SK-N-SH (cell line): ENCODE measurements at regions of chr12 and their contacts with region 1.

Region 1: DNA sequence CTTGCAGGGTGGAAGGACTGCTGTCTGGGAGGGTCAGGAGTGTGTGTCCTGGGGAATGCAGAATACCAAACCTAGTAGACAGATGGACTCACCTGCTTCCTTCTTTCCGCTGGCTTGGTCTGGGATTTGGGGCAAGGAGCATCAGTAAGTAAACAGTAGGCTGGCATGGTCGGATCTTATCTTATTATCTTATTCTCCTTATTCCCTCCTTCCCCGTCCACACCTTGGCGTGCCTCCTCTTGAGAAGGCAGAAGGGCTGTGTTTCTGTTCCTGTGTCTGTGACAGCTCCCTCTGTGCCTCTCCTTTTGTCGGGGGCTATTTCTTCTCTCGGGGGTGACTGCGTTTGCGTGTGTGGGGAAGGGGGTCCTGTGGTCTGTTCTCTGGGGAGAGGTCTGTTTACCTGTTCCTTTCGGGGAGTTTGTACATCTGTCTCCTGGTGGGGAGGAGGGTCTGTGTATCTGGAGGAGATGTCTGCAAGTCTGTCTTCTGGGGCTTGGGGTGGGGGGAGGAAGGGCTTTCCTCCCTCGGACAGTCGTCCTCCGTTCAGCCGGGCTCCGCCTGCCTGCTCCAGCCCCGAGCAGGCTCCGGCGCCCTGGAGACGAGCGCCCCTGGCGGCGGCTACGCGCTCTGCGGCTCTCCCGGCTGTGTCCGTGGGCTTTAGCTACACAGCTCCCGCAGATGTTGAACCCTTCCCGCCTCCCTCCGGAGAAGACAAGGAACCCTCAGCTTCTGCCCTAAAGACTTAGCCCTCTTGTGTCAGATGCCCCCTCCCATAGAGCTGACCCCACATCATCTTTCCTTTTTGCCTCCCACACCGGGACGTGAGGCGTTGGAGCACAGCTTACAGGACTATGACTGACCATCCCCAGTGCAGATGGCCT is 4.3 kb downstream of the KRT86 start:
- DNase-seq: peak; percentile 92
- H3K4me3 ChIP-seq: peak overlapping the region; percentile 14 to 31
- H3K27ac ChIP-seq: peak overlapping the region in 1 of 2 experiments; percentile 97; a peak in 2 of 4 replicates
- H3K4me1 ChIP-seq: peaks cover 11 to 28% of the 10 kb centered on the region in 2 experiments; a peak in 3 of 4 replicates
- H3K27me3 ChIP-seq: no peaks in the 10 kb centered on the region
- CTCF ChIP-seq: peak; percentile 97
- EP300 ChIP-seq: no peak
- RAD21 ChIP-seq: peak; percentile 84

Region 2: DNA sequence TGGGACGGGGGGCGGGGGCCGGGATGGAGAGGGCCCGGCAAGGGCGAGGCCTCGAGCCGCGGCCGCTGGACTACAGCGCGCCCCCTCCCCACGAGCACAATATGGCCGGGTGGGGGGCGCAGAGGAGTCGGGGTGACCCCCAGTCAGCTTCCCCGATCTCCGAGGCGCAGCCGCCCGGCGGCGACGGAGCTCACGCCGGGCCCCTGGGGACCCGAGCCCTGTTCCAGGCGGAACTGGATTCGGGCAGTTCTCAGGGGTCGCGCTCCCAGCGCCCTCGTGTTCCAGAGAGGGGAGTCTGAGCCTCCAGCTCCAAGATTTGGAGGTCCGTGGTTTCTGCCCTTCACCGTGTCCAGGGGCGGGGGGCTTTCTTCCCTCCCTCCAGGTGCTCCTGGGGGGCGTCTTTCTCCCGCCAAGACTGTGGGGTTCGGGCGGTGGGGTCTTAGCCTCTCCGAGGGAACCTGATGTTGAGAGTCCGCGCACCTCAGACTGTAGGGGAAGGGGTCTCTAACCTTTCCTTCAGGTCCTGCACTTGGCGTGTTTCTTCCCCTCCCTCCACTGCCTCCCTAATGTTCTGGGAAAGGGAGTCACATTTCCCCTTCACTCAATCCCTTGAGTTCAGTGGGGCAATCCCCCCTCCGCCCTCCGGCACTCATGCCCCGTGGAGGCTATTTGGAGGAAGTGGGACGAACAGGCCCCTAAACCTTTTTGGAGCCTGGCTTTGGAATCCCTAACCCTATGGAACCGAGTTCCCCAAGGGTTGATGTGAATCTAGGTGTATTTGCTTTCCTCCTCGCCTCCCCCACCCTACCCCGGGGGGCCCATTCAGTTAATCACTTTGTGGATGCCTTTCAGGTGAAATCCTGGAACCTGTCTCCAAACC is 326.7 kb before region 1 on chr12:
- CTCF ChIA-PET with region 1: no interaction called
- POLR2A ChIA-PET with region 1: no interaction called
- DNase-seq: peak; percentile 30
- H3K4me3 ChIP-seq: peak overlapping the region; percentile 84 to 94
- H3K27ac ChIP-seq: peak overlapping the region in 1 of 2 experiments; percentile 89; a peak in 2 of 4 replicates
- H3K4me1 ChIP-seq: peaks cover 6 to 20% of the 10 kb centered on the region in 2 experiments; a peak in 2 of 4 replicates
- H3K27me3 ChIP-seq: 0 out of 2 replicates have a peak, but pooled peaks cover 9% of the 10 kb centered on the region
- CTCF ChIP-seq: no peak
- EP300 ChIP-seq: no peak
- RAD21 ChIP-seq: no peak

Region 3: GRCh38 chr12:52186145-52186840 is 92.5 kb before region 1 on chr12:
- CTCF ChIA-PET with region 1: interaction called, 17 read pairs
- POLR2A ChIA-PET with region 1: no interaction called
- DNase-seq: no peak
- H3K4me3 ChIP-seq: no peak overlapping the region
- H3K27ac ChIP-seq: peak overlapping the region; percentile 87 to 92
- H3K4me1 ChIP-seq: peaks cover 66 to 83% of the 10 kb centered on the region in 2 experiments
- H3K27me3 ChIP-seq: no peaks in the 10 kb centered on the region
- CTCF ChIP-seq: no peak
- EP300 ChIP-seq: peak in 1 of 2 experiments; percentile 12; a peak in 1 of 4 replicates
- RAD21 ChIP-seq: no peak

Region 4: GRCh38 chr12:52221912-52222457 is 56.8 kb before region 1 on chr12:
- CTCF ChIA-PET with region 1: interaction called, 19 read pairs
- POLR2A ChIA-PET with region 1: no interaction called
- DNase-seq: no peak
- H3K4me3 ChIP-seq: no peak overlapping the region; a peak in 1 of 4 replicates
- H3K27ac ChIP-seq: peak overlapping the region in 1 of 2 experiments; percentile 33; a peak in 1 of 4 replicates
- H3K4me1 ChIP-seq: peaks cover 3 to 9% of the 10 kb centered on the region in 2 experiments; a peak in 2 of 4 replicates
- H3K27me3 ChIP-seq: no peaks in the 10 kb centered on the region
- CTCF ChIP-seq: peak; percentile 66
- EP300 ChIP-seq: no peak
- RAD21 ChIP-seq: peak; percentile 35

Region 5: GRCh38 chr12:52249051-52249461 is 29.7 kb before region 1 on chr12:
- CTCF ChIA-PET with region 1: interaction called, 16 read pairs
- POLR2A ChIA-PET with region 1: no interaction called
- DNase-seq: no peak
- H3K4me3 ChIP-seq: no peak overlapping the region
- H3K27ac ChIP-seq: peak overlapping the region; percentile 36 to 49; a peak in 3 of 4 replicates
- H3K4me1 ChIP-seq: peaks cover 10 to 21% of the 10 kb centered on the region in 2 experiments; a peak in 3 of 4 replicates
- H3K27me3 ChIP-seq: no peaks in the 10 kb centered on the region
- CTCF ChIP-seq: no peak
- EP300 ChIP-seq: no peak
- RAD21 ChIP-seq: no peak

Region 6: DNA sequence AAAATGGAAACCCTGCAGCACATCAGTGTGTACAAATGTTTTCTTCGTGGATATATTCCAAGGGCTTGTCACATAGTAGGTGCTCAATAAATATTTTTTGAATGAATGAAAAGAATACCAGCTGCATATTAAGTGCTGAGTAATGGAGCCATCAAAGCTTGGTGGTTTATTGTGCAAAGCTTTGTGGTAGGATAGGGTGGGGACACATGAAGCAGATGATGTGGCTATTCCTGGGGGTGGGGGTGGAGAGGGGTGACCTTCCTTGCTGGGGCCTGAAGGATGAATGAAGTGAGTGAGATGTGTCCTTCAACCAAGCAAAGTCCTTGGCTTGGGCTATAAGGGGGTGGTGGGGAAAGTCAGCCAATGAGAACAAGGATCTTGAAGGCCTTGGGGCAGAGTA is 16.9 kb after region 1 on chr12:
- CTCF ChIA-PET with region 1: interaction called, 25 read pairs
- POLR2A ChIA-PET with region 1: no interaction called
- DNase-seq: no peak
- H3K4me3 ChIP-seq: no peak overlapping the region
- H3K27ac ChIP-seq: no peak overlapping the region
- H3K4me1 ChIP-seq: peaks cover 0 to 4% of the 10 kb centered on the region in 2 experiments; a peak in 1 of 4 replicates
- H3K27me3 ChIP-seq: no peaks in the 10 kb centered on the region
- CTCF ChIP-seq: no peak
- EP300 ChIP-seq: no peak
- RAD21 ChIP-seq: no peak

Region 7: DNA sequence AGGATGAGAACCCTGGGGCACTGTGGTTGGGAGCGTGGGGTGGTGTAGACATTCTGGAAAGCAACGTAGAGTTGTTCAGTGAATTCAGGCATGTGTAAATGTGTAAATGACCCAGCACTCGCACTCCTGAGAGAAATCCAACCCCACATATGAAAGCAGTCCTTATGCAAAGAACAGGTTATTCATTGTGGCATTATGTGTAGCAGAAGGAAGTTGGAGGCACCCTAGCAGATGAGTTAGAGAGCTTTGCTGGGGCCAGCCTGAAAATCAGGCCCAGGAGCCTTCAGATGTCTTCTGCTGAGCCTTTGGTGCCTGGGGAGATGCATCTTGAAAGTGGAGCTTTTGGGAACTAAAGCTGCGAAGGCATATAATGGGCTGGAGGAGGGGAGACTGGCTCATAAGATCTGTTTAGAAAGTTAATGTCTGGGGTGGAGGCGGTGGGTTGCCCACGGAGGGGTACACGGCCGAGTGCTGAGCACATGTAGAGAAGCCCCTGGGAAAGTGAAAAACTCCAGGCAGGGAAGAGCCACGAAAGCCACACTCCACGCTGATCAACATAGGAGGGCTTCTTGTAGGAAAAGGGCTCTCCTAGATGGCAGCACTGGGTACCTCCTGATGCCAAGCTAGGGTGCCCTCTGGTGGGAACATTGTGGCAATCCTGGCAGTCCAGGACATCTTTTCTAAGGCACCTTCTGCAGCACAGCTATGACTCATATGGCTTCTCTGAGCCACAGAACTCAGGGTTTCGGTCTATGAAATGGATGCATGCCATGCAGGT is 48.5 kb after region 1 on chr12:
- CTCF ChIA-PET with region 1: interaction called, 66 read pairs
- POLR2A ChIA-PET with region 1: no interaction called
- DNase-seq: peak; percentile 91
- H3K4me3 ChIP-seq: no peak overlapping the region
- H3K27ac ChIP-seq: no peak overlapping the region
- H3K4me1 ChIP-seq: peaks cover 0 to 6% of the 10 kb centered on the region in 2 experiments; a peak in 1 of 4 replicates
- H3K27me3 ChIP-seq: no peaks in the 10 kb centered on the region; the same call in 1 of the 2 replicates
- CTCF ChIP-seq: peak; percentile 93
- EP300 ChIP-seq: peak in 1 of 2 experiments; percentile 15; a peak in 1 of 4 replicates
- RAD21 ChIP-seq: peak; percentile 94

Region 8: GRCh38 chr12:52364901-52365489 is 86.2 kb after region 1 on chr12:
- CTCF ChIA-PET with region 1: no interaction called
- POLR2A ChIA-PET with region 1: no interaction called
- DNase-seq: no peak
- H3K4me3 ChIP-seq: no peak overlapping the region
- H3K27ac ChIP-seq: no peak overlapping the region
- H3K4me1 ChIP-seq: no peaks in the 10 kb centered on the region
- H3K27me3 ChIP-seq: peaks cover 66% of the 10 kb centered on the region
- CTCF ChIP-seq: no peak
- EP300 ChIP-seq: no peak
- RAD21 ChIP-seq: no peak